ENCODE measurements at regions of chr22 and their contacts with region 1.

Region 1: GRCh38 chr22:28741758-28742561 is at the starts of genes CHEK2 and HSCB:
- DNase-seq: peak; percentile 99
- ATAC-seq: peak; percentile 93
- H3K4me3 Mint-ChIP-seq: peak within 1 kb of the TSS; percentile 81
- H3K27ac Mint-ChIP-seq: peak within 1 kb of the TSS; percentile 83
- H3K4me1 Mint-ChIP-seq: peaks cover 32% of the 10 kb centered on the region
- H3K27me3 Mint-ChIP-seq: no peaks in the 10 kb centered on the region
- total RNA-seq, gene CHEK2: 37.5 to 41.3 TPM
- total RNA-seq, gene HSCB: 16.5 to 18.5 TPM

Region 2: DNA sequence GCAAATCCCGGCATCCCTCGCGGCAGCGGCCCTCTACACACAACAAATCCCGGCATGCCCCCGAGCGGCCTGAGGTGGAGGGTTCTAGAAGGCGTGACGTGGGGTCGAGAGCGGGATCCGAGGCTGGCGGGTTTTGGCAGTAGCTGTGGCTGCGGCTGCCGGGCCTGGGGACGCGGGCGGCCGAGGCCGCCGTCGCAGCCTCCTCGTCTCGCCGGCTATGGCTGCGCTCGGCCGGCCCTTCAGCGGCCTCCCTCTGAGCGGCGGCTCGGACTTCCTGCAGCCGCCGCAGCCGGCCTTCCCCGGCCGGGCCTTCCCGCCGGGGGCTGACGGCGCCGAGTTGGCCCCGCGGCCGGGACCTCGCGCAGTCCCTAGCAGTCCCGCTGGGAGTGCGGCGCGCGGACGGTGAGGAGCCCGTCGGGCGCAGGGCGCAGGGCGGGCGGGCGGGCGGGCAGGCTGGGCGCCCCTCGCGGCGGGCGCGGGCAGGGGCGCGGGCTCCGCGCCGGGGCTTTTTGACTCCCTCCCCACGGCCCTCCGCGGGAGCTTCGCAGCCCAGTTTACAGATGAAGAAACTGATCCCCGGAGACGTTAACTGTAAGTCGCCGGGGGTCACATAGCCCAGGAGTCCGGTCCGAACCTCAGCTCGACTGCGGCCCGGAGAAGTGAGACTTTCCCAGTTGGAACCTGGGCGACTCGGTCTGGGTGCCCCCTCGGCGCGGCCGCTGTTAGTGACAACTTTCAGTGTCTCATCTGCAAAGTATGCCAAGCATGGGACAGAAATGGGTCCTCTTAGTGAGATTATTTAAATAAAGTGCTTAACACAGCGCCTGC is 30.9 kb after region 1 on chr22 and contains the start of gene CCDC117:
- CTCF ChIA-PET with region 1: interaction called, 5 read pairs
- POLR2A ChIA-PET with region 1: interaction called, 4 read pairs
- intact Hi-C with region 1: loop called (anchors 1 kb)
- DNase-seq: peak; percentile 96
- ATAC-seq: peak; percentile 91
- H3K4me3 Mint-ChIP-seq: peak within 1 kb of the TSS; percentile 94
- H3K27ac Mint-ChIP-seq: peak within 1 kb of the TSS; percentile 99
- H3K4me1 Mint-ChIP-seq: peaks cover 19% of the 10 kb centered on the region
- H3K27me3 Mint-ChIP-seq: no peaks in the 10 kb centered on the region
- total RNA-seq, gene CCDC117: 36.1 to 36.8 TPM

Region 3: GRCh38 chr22:29387921-29388758 is 646.2 kb after region 1 on chr22 and contains the start of gene AP1B1:
- CTCF ChIA-PET with region 1: no interaction called
- POLR2A ChIA-PET with region 1: no interaction called
- intact Hi-C with region 1: loop called in 1 of 2 experiments (anchors 5 kb)
- DNase-seq: peak; percentile 97
- ATAC-seq: peak; percentile 99
- H3K4me3 Mint-ChIP-seq: peak within 1 kb of the TSS; percentile 87
- H3K27ac Mint-ChIP-seq: peak within 1 kb of the TSS; percentile 83
- H3K4me1 Mint-ChIP-seq: peaks cover 30% of the 10 kb centered on the region
- H3K27me3 Mint-ChIP-seq: no peaks in the 10 kb centered on the region
- total RNA-seq, gene AP1B1: 56.6 to 59.9 TPM